CD4-positive, alpha-beta memory T cell (primary cell): ENCODE measurements at regions of chr6 and their contacts with region 1.

Region 1: DNA sequence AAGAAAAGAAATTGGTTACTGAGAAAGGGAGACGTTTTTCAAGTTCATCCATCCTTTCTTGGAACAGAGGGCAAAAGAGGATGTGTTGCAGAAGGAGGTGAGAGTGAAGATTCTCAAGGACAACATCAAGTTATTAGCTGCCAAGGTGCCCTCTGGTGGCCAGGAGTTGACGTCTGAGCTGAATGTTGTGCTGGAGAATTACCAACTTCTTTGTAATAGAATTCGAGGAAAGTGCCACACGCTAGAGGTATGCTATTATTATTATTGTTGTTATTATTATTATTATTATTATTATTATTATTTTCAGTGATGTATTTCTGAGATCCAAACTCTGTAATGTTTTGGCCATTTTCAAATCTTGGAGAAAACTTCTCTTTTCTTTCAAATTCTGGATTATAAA is 197.0 kb downstream of the UTRN start:
- DNase-seq: peak; percentile 58 to 74 (median 60)
- H3K4me3 ChIP-seq: no peak overlapping the region
- H3K4me3 Mint-ChIP-seq: no peak overlapping the region
- H3K27ac ChIP-seq: no peak overlapping the region
- H3K27ac Mint-ChIP-seq: peak overlapping the region in 5 of 7 donors; percentile 18 to 62 (median 23)
- H3K4me1 ChIP-seq: no peaks in the 10 kb centered on the region
- H3K4me1 Mint-ChIP-seq: peaks cover 0 to 12% (median 3%) of the 10 kb centered on the region in 4 donors
- H3K27me3 ChIP-seq: no peaks in the 10 kb centered on the region
- H3K27me3 Mint-ChIP-seq: no peaks in the 10 kb centered on the region

Region 2: GRCh38 chr6:143872201-143872600 is 609.9 kb before region 1 on chr6:
- CTCF ChIA-PET with region 1: no interaction called
- POLR2A ChIA-PET with region 1: no interaction called
- intact Hi-C with region 1: no loop called
- DNase-seq: no peak
- H3K4me3 ChIP-seq: no peak overlapping the region
- H3K4me3 Mint-ChIP-seq: peak overlapping the region in 2 of 8 donors; percentile 15 to 60
- H3K27ac ChIP-seq: no peak overlapping the region
- H3K27ac Mint-ChIP-seq: peak overlapping the region in 3 of 7 donors; percentile 49 to 86 (median 73)
- H3K4me1 ChIP-seq: peaks cover 4% of the 10 kb centered on the region
- H3K4me1 Mint-ChIP-seq: peaks cover 4 to 16% (median 6%) of the 10 kb centered on the region in 4 donors
- H3K27me3 ChIP-seq: no peaks in the 10 kb centered on the region
- H3K27me3 Mint-ChIP-seq: no peaks in the 10 kb centered on the region

Region 3: GRCh38 chr6:144104898-144105487 is 377.1 kb before region 1 on chr6:
- CTCF ChIA-PET with region 1: interaction called, 29 read pairs
- POLR2A ChIA-PET with region 1: no interaction called
- intact Hi-C with region 1: loop called (anchors 1 kb)
- DNase-seq: peak; percentile 45 to 70 (median 67)
- H3K4me3 ChIP-seq: no peak overlapping the region
- H3K4me3 Mint-ChIP-seq: no peak overlapping the region
- H3K27ac ChIP-seq: no peak overlapping the region
- H3K27ac Mint-ChIP-seq: peak overlapping the region in 1 of 7 donors; percentile 84
- H3K4me1 ChIP-seq: no peaks in the 10 kb centered on the region
- H3K4me1 Mint-ChIP-seq: peaks cover 1 to 4% (median 3%) of the 10 kb centered on the region in 4 donors
- H3K27me3 ChIP-seq: no peaks in the 10 kb centered on the region
- H3K27me3 Mint-ChIP-seq: no peaks in the 10 kb centered on the region

Region 4: GRCh38 chr6:144149891-144150709 is 332.0 kb before region 1 on chr6 and contains the start of gene STX11:
- CTCF ChIA-PET with region 1: no interaction called
- POLR2A ChIA-PET with region 1: no interaction called
- intact Hi-C with region 1: loop called (anchors 1 kb)
- DNase-seq: peak; percentile 64 to 78 (median 68)
- H3K4me3 ChIP-seq: peak within 1 kb of the TSS; percentile 63 to 84
- H3K4me3 Mint-ChIP-seq: peak within 1 kb of the TSS; percentile 95 to 97 (median 96)
- H3K27ac ChIP-seq: peak within 1 kb of the TSS; percentile 80
- H3K27ac Mint-ChIP-seq: peak within 1 kb of the TSS; percentile 85 to 98 (median 96)
- H3K4me1 ChIP-seq: peaks cover 29% of the 10 kb centered on the region
- H3K4me1 Mint-ChIP-seq: peaks cover 24 to 29% (median 27%) of the 10 kb centered on the region in 4 donors
- H3K27me3 ChIP-seq: no peaks in the 10 kb centered on the region
- H3K27me3 Mint-ChIP-seq: no peaks in the 10 kb centered on the region
- total RNA-seq, gene STX11: 5.7 to 6.2 TPM

Region 5: GRCh38 chr6:144262470-144263369 is 219.4 kb before region 1 on chr6:
- CTCF ChIA-PET with region 1: interaction called, 20 read pairs
- POLR2A ChIA-PET with region 1: no interaction called
- intact Hi-C with region 1: loop called (anchors 1 kb)
- DNase-seq: peak in 3 of 5 donors; percentile 18 to 28 (median 26)
- H3K4me3 ChIP-seq: no peak overlapping the region
- H3K4me3 Mint-ChIP-seq: no peak overlapping the region
- H3K27ac ChIP-seq: no peak overlapping the region
- H3K27ac Mint-ChIP-seq: no peak overlapping the region
- H3K4me1 ChIP-seq: no peaks in the 10 kb centered on the region
- H3K4me1 Mint-ChIP-seq: peaks cover 0 to 2% (median 0%) of the 10 kb centered on the region in 4 donors
- H3K27me3 ChIP-seq: no peaks in the 10 kb centered on the region
- H3K27me3 Mint-ChIP-seq: peaks cover 0 to 2% of the 10 kb centered on the region in 2 donors

Region 6: GRCh38 chr6:144284783-144285547 is 197.2 kb before region 1 on chr6 and contains the start of gene UTRN:
- CTCF ChIA-PET with region 1: interaction called, 3 read pairs
- POLR2A ChIA-PET with region 1: interaction called, 3 read pairs
- intact Hi-C with region 1: loop called (anchors 10 kb)
- DNase-seq: peak; percentile 18 to 40 (median 30)
- H3K4me3 ChIP-seq: peak within 1 kb of the TSS; percentile 65 to 89
- H3K4me3 Mint-ChIP-seq: peak within 1 kb of the TSS; percentile 88 to 98 (median 96)
- H3K27ac ChIP-seq: peak within 1 kb of the TSS; percentile 10
- H3K27ac Mint-ChIP-seq: peak within 1 kb of the TSS; percentile 53 to 86 (median 68)
- H3K4me1 ChIP-seq: peaks cover 20% of the 10 kb centered on the region
- H3K4me1 Mint-ChIP-seq: peaks cover 9 to 23% (median 18%) of the 10 kb centered on the region in 4 donors
- H3K27me3 ChIP-seq: no peaks in the 10 kb centered on the region
- H3K27me3 Mint-ChIP-seq: no peaks in the 10 kb centered on the region
- total RNA-seq, gene UTRN: 219 to 227 TPM

Region 7: GRCh38 chr6:144334131-144334708 is 147.9 kb before region 1 on chr6:
- CTCF ChIA-PET with region 1: no interaction called
- POLR2A ChIA-PET with region 1: no interaction called
- intact Hi-C with region 1: loop called (anchors 5 kb)
- DNase-seq: peak; percentile 75 to 88 (median 78)
- H3K4me3 ChIP-seq: peak overlapping the region in 1 of 2 donors; percentile 58
- H3K4me3 Mint-ChIP-seq: peak overlapping the region; percentile 73 to 90 (median 85)
- H3K27ac ChIP-seq: peak overlapping the region; percentile 64
- H3K27ac Mint-ChIP-seq: peak overlapping the region; percentile 86 to 97 (median 96)
- H3K4me1 ChIP-seq: peaks cover 38% of the 10 kb centered on the region
- H3K4me1 Mint-ChIP-seq: peaks cover 44 to 62% (median 53%) of the 10 kb centered on the region in 4 donors
- H3K27me3 ChIP-seq: no peaks in the 10 kb centered on the region
- H3K27me3 Mint-ChIP-seq: no peaks in the 10 kb centered on the region

Region 8: DNA sequence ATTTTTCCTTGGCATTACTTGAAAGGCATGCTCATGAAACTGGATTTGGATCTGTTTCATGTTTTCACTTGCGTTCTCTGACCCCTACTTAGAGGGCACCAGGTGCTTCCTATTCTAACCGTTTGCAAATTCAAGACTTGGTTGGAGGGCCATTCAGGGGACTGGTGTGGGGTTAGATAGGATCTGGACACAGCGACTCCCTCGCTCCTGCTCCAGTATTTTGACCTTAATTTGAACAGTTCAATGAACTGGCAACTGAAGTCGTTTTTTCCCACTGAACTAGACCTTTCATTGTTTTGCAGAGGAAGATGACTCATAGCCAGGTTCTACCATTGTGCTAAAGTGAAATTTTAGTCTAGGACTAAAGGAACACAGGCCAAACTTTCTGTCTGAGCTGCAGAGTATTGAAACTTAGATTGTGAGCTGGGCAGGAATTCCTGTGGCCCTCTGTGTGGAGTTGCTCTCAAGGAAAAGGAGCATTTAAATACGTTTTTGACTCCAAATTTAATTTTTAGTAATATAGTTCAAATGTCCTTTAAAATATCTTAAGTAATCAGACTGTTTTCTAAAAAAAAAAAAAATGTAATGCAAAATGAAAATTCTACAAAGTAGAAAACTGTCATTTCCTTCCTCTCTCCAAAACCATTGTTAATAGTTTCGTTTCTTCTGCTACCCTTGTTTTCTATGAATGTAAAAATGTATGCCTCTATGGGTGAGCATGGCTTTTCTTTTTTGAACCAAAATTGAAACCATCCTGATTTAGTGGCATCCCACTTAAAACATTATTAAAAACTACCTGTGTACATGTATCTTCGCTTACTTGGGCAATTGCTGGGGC is 132.2 kb before region 1 on chr6:
- CTCF ChIA-PET with region 1: interaction called, 3 read pairs
- POLR2A ChIA-PET with region 1: interaction called, 3 read pairs
- intact Hi-C with region 1: loop called (anchors 5 kb)
- DNase-seq: peak; percentile 42 to 49 (median 44)
- H3K4me3 ChIP-seq: peak overlapping the region; percentile 6 to 18
- H3K4me3 Mint-ChIP-seq: peak overlapping the region; percentile 75 to 90 (median 79)
- H3K27ac ChIP-seq: peak overlapping the region; percentile 61
- H3K27ac Mint-ChIP-seq: peak overlapping the region; percentile 81 to 96 (median 93)
- H3K4me1 ChIP-seq: peaks cover 98% of the 10 kb centered on the region
- H3K4me1 Mint-ChIP-seq: peaks cover 59 to 93% (median 80%) of the 10 kb centered on the region in 4 donors
- H3K27me3 ChIP-seq: no peaks in the 10 kb centered on the region
- H3K27me3 Mint-ChIP-seq: no peaks in the 10 kb centered on the region

Region 9: GRCh38 chr6:144653885-144654505 is 171.9 kb after region 1 on chr6:
- CTCF ChIA-PET with region 1: no interaction called
- POLR2A ChIA-PET with region 1: no interaction called
- intact Hi-C with region 1: no loop called
- DNase-seq: peak; percentile 11 to 37 (median 21)
- H3K4me3 ChIP-seq: no peak overlapping the region
- H3K4me3 Mint-ChIP-seq: peak overlapping the region; percentile 22 to 78 (median 64)
- H3K27ac ChIP-seq: peak overlapping the region; percentile 24
- H3K27ac Mint-ChIP-seq: peak overlapping the region; percentile 74 to 92 (median 81)
- H3K4me1 ChIP-seq: peaks cover 57% of the 10 kb centered on the region
- H3K4me1 Mint-ChIP-seq: peaks cover 49 to 72% (median 61%) of the 10 kb centered on the region in 4 donors
- H3K27me3 ChIP-seq: no peaks in the 10 kb centered on the region
- H3K27me3 Mint-ChIP-seq: no peaks in the 10 kb centered on the region

Region 10: GRCh38 chr6:144878577-144878976 is 396.4 kb after region 1 on chr6:
- CTCF ChIA-PET with region 1: no interaction called
- POLR2A ChIA-PET with region 1: no interaction called
- intact Hi-C with region 1: no loop called
- DNase-seq: no peak
- H3K4me3 ChIP-seq: no peak overlapping the region
- H3K4me3 Mint-ChIP-seq: no peak overlapping the region
- H3K27ac ChIP-seq: no peak overlapping the region
- H3K27ac Mint-ChIP-seq: no peak overlapping the region
- H3K4me1 ChIP-seq: no peaks in the 10 kb centered on the region
- H3K4me1 Mint-ChIP-seq: peaks cover 0 to 2% (median 0%) of the 10 kb centered on the region in 4 donors
- H3K27me3 ChIP-seq: no peaks in the 10 kb centered on the region
- H3K27me3 Mint-ChIP-seq: peaks cover 14 to 16% of the 10 kb centered on the region in 2 donors